Ascending aorta (tissue), 2 donors: ENCODE measurements at regions of chr16 and their contacts with region 1.

Region 1: GRCh38 chr16:87571136-87571867 is 31.0 kb upstream of the JPH3 start:
- DNase-seq: peak; percentile 54 to 86
- H3K4me3 ChIP-seq: no peak overlapping the region
- H3K27ac ChIP-seq: peak overlapping the region; percentile 88 to 91
- H3K4me1 ChIP-seq: peaks cover 14 to 25% of the 10 kb centered on the region in 2 donors
- H3K27me3 ChIP-seq: no peaks in the 10 kb centered on the region
- CTCF ChIP-seq: peak; percentile 58 to 67 (median 59)

Region 2: GRCh38 chr16:87404764-87405625 is 166.3 kb before region 1 on chr16:
- intact Hi-C with region 1: no loop called
- DNase-seq: no peak
- H3K4me3 ChIP-seq: no peak overlapping the region
- H3K27ac ChIP-seq: no peak overlapping the region
- H3K4me1 ChIP-seq: no peaks in the 10 kb centered on the region
- H3K27me3 ChIP-seq: no peaks in the 10 kb centered on the region
- CTCF ChIP-seq: no peak

Region 3: DNA sequence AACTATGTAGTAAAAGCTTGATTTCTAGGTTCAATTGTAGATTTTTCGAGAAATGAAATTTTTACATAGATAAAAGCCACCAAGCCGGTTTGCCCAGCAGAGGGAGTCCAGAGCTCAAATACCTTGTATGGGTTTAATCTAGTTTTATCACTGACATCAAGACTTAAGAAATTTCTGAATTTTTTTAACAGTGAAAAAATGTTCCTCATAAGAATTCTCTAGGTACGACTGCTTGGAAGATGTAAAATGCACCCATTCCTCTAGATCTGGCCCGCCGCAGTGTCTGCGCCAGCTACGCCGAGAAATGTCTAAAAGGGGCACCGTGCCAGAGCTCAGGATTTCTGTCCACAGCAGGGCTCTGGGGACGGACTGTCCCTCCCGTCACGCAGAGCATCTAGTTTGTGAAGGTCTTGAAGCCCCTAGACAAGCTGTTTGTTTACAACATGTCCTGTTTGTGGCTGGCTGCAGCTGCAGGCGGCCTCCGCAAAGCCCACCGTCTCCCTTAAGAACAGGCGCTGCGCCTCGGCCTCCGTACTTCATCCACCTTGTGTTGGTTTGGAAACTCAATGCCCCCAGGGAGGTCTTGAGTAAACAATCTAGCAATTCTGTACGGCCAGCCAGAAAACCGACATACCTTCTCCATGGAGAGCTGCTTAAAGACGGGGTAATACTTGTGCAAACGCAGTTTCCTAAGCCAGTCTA is 154.3 kb before region 1 on chr16:
- intact Hi-C with region 1: loop called (anchors 1 kb)
- DNase-seq: no peak
- H3K4me3 ChIP-seq: no peak overlapping the region
- H3K27ac ChIP-seq: no peak overlapping the region
- H3K4me1 ChIP-seq: no peaks in the 10 kb centered on the region
- H3K27me3 ChIP-seq: no peaks in the 10 kb centered on the region
- CTCF ChIP-seq: peak; percentile 32 to 70 (median 57)

Region 4: GRCh38 chr16:87435372-87436224 is 135.7 kb before region 1 on chr16:
- intact Hi-C with region 1: no loop called
- DNase-seq: no peak
- H3K4me3 ChIP-seq: peak overlapping the region in 1 of 2 donors; percentile 25
- H3K27ac ChIP-seq: peak overlapping the region; percentile 61
- H3K4me1 ChIP-seq: peaks cover 6 to 12% of the 10 kb centered on the region in 2 donors
- H3K27me3 ChIP-seq: no peaks in the 10 kb centered on the region
- CTCF ChIP-seq: no peak

Region 5: GRCh38 chr16:87492721-87493607 is 78.3 kb before region 1 on chr16 and contains the start of gene ZCCHC14:
- intact Hi-C with region 1: loop called (anchors 2 kb)
- DNase-seq: peak; percentile 96 to 99
- H3K4me3 ChIP-seq: peak within 1 kb of the TSS; percentile 57 to 90
- H3K27ac ChIP-seq: peak within 1 kb of the TSS; percentile 21 to 72
- H3K4me1 ChIP-seq: peaks cover 8 to 22% of the 10 kb centered on the region in 2 donors
- H3K27me3 ChIP-seq: no peaks in the 10 kb centered on the region
- CTCF ChIP-seq: peak in 1 of 3 experiments; percentile 22
- total RNA-seq, gene ZCCHC14: 131 TPM

Region 6: DNA sequence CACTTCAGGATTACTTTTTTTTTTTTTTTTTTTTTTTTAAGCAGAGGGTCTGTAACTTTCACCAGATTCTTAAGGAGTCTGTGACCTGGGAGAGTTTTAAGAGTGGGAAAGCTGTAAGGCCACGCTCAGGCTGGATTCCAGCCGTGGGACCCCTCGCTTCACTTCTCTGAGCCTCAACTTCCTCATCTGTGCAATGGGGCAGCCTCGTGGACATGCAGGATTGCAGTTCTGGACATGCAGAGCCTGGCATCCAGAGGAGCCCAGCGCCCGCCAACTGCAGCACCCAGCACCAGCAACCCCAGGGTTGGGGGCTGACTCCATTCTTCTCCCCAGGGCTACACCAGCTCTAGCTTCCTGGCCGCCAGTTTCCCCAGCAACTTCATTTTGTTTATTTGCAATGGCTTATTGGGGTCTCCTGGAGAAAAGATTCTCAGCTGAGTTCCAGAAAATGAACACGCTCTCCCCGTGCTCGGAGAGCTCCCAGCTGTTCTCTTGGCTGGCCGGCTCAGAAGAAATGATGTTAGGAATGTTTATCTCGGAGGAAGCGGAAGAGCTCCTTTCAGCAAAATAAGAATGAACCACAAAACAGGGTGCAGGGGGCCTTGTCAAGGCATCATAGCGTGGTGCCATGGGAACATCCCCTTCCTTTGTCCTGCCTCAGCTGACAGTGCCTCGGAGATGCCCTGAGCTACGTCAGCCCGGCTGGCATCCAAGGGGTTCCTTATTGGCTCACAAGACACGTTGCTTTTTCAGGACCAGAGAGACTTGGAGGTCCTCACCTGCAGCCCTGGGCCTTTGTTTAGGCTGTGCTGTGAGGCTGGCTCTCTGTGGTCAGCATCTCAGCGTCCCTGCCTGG is 55.6 kb before region 1 on chr16:
- intact Hi-C with region 1: loop called (anchors 2 kb)
- DNase-seq: no peak
- H3K4me3 ChIP-seq: no peak overlapping the region
- H3K27ac ChIP-seq: peak overlapping the region; percentile 95 to 99
- H3K4me1 ChIP-seq: peaks cover 9 to 26% of the 10 kb centered on the region in 2 donors
- H3K27me3 ChIP-seq: no peaks in the 10 kb centered on the region
- CTCF ChIP-seq: no peak

Region 7: GRCh38 chr16:87550496-87550961 is 20.8 kb before region 1 on chr16:
- intact Hi-C with region 1: loop called (anchors 2 kb)
- DNase-seq: no peak
- H3K4me3 ChIP-seq: no peak overlapping the region
- H3K27ac ChIP-seq: no peak overlapping the region
- H3K4me1 ChIP-seq: no peaks in the 10 kb centered on the region
- H3K27me3 ChIP-seq: no peaks in the 10 kb centered on the region
- CTCF ChIP-seq: peak; percentile 87 to 98 (median 97)

Region 8: DNA sequence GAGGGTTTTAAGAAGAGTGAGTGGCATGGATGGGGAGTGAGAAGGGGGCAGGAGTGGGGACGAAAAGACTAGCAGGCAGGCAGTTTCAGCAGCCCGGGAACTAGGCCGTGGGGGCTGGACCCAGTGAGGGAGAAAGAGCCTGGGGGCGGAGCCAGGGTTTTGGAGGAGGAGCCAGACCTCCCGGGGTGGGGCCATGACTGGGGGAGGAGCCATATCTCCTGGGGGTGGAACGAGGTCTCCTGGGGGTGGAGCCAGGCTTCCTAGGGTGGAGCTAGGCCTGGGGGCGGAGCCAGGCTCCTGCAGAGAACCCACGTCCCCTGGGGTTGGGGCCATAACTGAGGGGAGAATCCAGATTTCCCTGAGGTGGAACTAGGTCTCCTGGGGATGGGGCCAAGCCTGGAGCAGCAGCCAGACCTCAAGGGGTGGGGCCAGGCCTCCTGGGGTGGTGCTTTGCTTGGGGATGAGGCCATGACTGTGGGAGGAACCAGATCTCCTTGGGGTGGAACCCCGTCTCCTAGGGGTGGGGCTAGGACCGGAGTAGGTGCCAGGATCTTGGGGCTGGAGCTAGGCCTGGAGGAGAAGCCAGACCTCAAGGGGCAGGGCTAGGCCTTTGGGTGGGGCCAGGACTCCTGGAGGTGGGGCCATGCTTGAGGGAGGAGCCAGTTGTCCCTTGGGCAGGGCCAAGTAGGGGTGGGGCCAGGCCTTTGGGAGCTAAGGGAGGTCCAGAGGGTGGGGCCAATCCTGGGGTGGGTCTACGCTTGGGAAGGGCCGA is 10.7 kb before region 1 on chr16:
- intact Hi-C with region 1: no loop called
- DNase-seq: no peak
- H3K4me3 ChIP-seq: no peak overlapping the region
- H3K27ac ChIP-seq: no peak overlapping the region
- H3K4me1 ChIP-seq: peaks cover 6 to 7% of the 10 kb centered on the region in 2 donors
- H3K27me3 ChIP-seq: no peaks in the 10 kb centered on the region
- CTCF ChIP-seq: no peak

Region 9: DNA sequence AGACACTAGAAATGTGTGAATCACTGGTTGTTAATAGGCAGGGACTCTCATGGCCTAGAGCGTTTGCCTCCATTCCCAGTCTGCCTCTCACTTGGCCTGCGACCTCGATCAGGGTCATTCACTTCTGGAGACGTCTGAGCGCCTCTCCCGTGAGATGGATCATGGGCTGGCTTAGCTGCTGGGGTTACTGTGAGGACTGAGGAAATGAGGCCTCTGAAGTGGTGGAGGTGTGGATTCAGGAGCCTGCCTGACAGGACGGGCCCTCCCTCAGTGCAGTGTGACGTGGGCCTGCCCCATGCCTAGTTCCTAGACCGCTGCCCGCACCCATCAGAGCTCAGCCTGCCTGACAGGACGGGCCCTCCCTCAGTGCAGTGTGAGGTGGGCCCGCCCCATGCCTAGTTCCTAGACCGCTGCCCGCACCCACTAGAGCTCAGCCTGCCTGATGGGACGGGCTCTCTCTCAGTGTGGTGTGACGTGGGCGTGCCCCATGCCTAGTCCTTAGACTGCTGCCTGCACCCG is 441.8 kb after region 1 on chr16:
- intact Hi-C with region 1: no loop called
- DNase-seq: no peak
- H3K4me3 ChIP-seq: no peak overlapping the region
- H3K27ac ChIP-seq: no peak overlapping the region
- H3K4me1 ChIP-seq: no peaks in the 10 kb centered on the region
- H3K27me3 ChIP-seq: no peaks in the 10 kb centered on the region
- CTCF ChIP-seq: no peak